ENCODE measurements at regions of chr2 and their contacts with region 1.

Region 1: GRCh38 chr2:108637304-108637669 is 82.0 kb upstream of the RANBP2 start:
- DNase-seq: peak; percentile 55
- H3K4me3 ChIP-seq: peak overlapping the region; percentile 22
- H3K27ac ChIP-seq: peak overlapping the region; percentile 90
- H3K4me1 ChIP-seq: peaks cover 97% of the 10 kb centered on the region
- H3K27me3 ChIP-seq: no peaks in the 10 kb centered on the region
- CTCF ChIP-seq: no peak

Region 2: DNA sequence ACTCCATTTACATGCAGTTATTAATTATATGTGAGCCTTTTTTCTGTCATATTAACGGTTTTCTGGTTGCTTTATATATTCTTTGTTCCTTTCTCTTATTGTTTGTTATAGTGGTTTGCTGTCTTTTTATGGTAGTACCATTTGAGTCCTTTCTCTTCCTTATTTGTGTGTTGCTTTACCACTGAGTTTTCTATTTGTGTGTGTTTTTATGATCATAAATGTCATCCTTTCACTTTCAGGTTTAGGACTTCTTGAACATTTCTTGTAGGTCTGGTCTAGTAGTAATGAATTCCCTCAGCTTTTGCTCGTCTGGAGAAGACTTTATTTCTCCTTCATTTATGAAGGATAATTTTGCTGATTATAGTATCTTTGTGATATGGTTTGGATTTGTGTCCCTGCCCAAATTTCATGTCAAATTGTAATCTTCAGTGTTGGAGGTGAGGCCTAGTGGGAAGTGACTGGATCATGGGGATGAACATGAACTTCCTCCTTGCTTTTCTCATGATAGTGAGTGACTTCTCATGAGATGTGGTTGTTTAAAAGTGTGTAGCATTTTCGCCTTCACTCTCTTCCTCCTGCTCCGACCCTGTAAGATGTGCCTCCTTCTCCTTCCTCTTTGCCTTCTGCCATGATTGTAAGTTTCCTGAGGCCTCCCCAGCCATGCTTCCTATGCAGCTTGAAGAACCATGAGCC is 176.8 kb before region 1 on chr2:
- intact Hi-C with region 1: no loop called
- DNase-seq: no peak
- H3K4me3 ChIP-seq: no peak overlapping the region
- H3K27ac ChIP-seq: no peak overlapping the region
- H3K4me1 ChIP-seq: no peaks in the 10 kb centered on the region
- H3K27me3 ChIP-seq: no peaks in the 10 kb centered on the region
- CTCF ChIP-seq: no peak

Region 3: GRCh38 chr2:108604196-108604595 is 33.1 kb before region 1 on chr2:
- intact Hi-C with region 1: loop called (anchors 5 kb)
- DNase-seq: no peak
- H3K4me3 ChIP-seq: no peak overlapping the region
- H3K27ac ChIP-seq: no peak overlapping the region
- H3K4me1 ChIP-seq: peaks cover 58% of the 10 kb centered on the region
- H3K27me3 ChIP-seq: no peaks in the 10 kb centered on the region
- CTCF ChIP-seq: no peak

Measured in left ventricle myocardium inferior (tissue), 1 donor.